Activated T-helper 1 cell treated with anti-CD3 and anti-CD28 coated beads, Interleukin-12 subunit alpha, Interleukin-12 subunit beta, Interleukin-2, Interleukin-4 antibody, amounts not matched to agents 30 ng/mL and 10 ng/mL and 1 ng/mL, durations not matched to agents 14 hours and 24 hours and 36 hours (primary cell): ENCODE measurements at regions of chr13 and their contacts with region 1.

Region 1: GRCh38 chr13:40388617-40389016 is 277.8 kb downstream of the FOXO1 start:
- DNase-seq: peak; percentile 79
- H3K4me3 Mint-ChIP-seq: peak overlapping the region; percentile 76
- H3K27ac Mint-ChIP-seq: peak overlapping the region; percentile 96
- H3K4me1 Mint-ChIP-seq: peaks cover 56% of the 10 kb centered on the region
- H3K27me3 Mint-ChIP-seq: no peaks in the 10 kb centered on the region

Region 2: DNA sequence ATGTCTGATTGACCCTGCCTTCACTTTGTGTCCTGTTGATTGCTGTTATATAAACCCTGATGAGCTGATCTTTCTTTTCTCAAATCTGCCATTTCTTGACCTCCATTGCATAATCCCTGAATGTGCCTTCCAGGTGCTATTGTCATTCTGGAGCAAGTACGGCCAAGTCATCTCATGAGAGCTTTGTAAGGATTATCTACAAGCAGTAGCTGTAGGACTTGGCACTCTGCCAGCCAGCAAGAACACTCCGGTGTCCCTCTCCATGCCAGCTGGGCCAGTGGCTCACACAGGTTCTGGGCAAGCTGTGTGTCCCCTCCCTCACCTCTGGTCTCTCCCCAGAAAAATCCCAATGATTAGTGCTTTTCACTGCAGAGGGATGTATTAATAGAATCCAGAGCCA is 70.3 kb before region 1 on chr13:
- intact Hi-C with region 1: loop called (anchors 2 kb)
- DNase-seq: no peak
- H3K4me3 Mint-ChIP-seq: no peak overlapping the region
- H3K27ac Mint-ChIP-seq: no peak overlapping the region
- H3K4me1 Mint-ChIP-seq: peaks cover 70% of the 10 kb centered on the region
- H3K27me3 Mint-ChIP-seq: no peaks in the 10 kb centered on the region

Region 3: DNA sequence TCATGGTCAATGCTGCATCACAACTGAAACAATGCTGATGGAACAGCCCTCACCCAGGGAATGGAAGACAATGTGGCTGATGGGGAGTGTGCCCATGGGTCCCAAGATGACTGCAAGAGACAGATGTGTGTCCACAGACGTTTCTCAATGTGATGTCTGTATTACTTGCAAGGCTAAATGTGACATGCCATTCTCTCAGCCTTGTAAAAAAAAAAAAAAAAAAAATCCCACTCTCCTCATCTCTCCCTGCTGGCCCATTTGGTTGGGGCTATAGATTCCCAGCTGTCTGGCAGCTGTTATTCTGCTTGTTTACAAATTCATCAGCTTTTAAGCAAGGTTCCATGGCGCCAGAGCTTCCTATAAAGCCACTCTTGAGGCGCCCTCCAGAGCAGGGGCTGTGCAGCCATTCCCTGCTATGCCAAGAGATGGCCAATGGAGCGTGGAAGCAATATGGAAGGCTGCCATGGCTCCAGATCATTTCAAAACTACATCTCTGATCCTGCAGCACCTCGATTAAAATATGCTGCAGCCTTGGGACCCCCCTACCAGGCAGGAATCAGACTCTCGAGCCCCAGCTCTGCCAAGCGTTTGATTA is 17.0 kb before region 1 on chr13:
- intact Hi-C with region 1: loop called (anchors 1 kb)
- DNase-seq: no peak
- H3K4me3 Mint-ChIP-seq: peak overlapping the region; percentile 1
- H3K27ac Mint-ChIP-seq: peak overlapping the region; percentile 67
- H3K4me1 Mint-ChIP-seq: peaks cover 46% of the 10 kb centered on the region
- H3K27me3 Mint-ChIP-seq: no peaks in the 10 kb centered on the region

Region 4: GRCh38 chr13:40438999-40439797 is 50.6 kb after region 1 on chr13:
- intact Hi-C with region 1: loop called (anchors 2 kb)
- DNase-seq: no peak
- H3K4me3 Mint-ChIP-seq: peak overlapping the region; percentile 23
- H3K27ac Mint-ChIP-seq: peak overlapping the region; percentile 73
- H3K4me1 Mint-ChIP-seq: peaks cover 33% of the 10 kb centered on the region
- H3K27me3 Mint-ChIP-seq: peaks cover 2% of the 10 kb centered on the region

Region 5: GRCh38 chr13:40485611-40486517 is 97.2 kb after region 1 on chr13:
- intact Hi-C with region 1: loop called (anchors 2 kb)
- DNase-seq: peak; percentile 50
- H3K4me3 Mint-ChIP-seq: peak overlapping the region; percentile 23
- H3K27ac Mint-ChIP-seq: peak overlapping the region; percentile 89
- H3K4me1 Mint-ChIP-seq: peaks cover 68% of the 10 kb centered on the region
- H3K27me3 Mint-ChIP-seq: no peaks in the 10 kb centered on the region

Region 6: DNA sequence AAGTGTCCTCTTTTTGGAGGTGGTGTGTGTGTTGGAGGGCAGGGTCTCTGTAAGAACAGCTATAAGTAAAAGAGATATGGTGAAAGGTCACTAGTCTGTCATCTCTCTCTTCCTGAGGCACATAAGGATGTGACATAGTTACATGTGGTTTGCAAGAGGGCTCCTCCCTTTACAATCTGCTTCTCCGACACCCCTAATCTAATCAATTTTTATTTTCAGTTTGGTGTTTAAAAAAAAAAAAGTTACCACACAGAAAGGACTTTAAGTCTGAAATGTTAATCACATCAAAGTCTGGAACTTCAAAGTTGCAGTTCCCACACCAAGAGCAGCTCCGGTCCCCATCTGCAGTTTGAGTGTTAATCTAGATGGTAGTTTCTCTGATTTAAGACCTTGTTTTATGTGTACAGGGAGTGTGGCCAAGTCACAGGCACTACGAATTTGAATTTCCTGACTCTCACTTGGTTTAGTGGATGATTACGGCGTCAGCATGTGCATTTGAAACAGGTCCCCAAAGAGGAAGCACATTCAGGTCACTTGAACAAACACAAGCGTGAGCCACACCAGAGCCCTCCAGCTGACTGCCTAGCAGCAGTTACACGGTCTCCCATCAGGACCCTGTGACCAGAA is 224.7 kb after region 1 on chr13:
- intact Hi-C with region 1: loop called (anchors 2 kb)
- DNase-seq: peak; percentile 45
- H3K4me3 Mint-ChIP-seq: peak overlapping the region; percentile 78
- H3K27ac Mint-ChIP-seq: peak overlapping the region; percentile 91
- H3K4me1 Mint-ChIP-seq: peaks cover 78% of the 10 kb centered on the region
- H3K27me3 Mint-ChIP-seq: no peaks in the 10 kb centered on the region

Region 7: DNA sequence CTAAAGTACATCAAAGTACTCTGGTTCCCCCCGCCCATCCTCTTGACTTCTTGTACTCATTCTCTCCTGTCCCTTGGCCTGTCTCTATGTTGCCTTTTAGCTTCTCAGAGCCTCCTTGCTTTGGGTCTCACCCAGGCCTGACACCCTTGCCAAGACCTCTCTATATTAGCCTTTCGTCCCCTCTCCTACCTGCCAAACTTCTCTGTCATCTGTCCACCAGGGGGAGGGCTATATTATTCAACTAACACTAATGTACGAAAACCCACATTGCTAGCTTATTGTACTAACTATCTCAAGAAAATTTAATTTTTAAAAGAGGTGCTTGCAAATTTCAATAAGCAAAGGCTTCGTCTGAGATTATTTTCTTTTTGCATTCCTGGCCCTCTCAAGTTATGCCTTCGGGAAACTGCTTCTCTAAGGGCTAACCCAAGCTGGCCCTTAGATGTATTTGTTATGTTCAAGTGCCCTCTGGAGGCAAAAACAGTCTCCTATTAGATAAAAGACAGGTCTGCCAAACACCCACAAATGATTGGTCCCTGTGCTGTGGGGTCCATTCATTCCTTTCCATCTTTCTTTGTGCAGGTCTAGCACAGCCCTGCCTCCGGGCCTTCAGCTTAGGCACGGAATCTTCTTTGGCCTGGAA is 388.7 kb after region 1 on chr13:
- intact Hi-C with region 1: loop called (anchors 5 kb)
- DNase-seq: peak; percentile 28
- H3K4me3 Mint-ChIP-seq: peak overlapping the region; percentile 76
- H3K27ac Mint-ChIP-seq: peak overlapping the region; percentile 99
- H3K4me1 Mint-ChIP-seq: peaks cover 33% of the 10 kb centered on the region
- H3K27me3 Mint-ChIP-seq: no peaks in the 10 kb centered on the region

Region 8: GRCh38 chr13:40874138-40874779 is 485.6 kb after region 1 on chr13:
- intact Hi-C with region 1: no loop called
- DNase-seq: no peak
- H3K4me3 Mint-ChIP-seq: no peak overlapping the region
- H3K27ac Mint-ChIP-seq: no peak overlapping the region
- H3K4me1 Mint-ChIP-seq: no peaks in the 10 kb centered on the region
- H3K27me3 Mint-ChIP-seq: no peaks in the 10 kb centered on the region